ENCODE measurements at regions of chr2 and their contacts with region 1.

Region 1: GRCh38 chr2:229273723-229274338 is 2.7 kb upstream of the PID1 start:
- DNase-seq: no peak
- H3K4me3 ChIP-seq: peak overlapping the region in 2 of 8 donors; percentile 10 to 45
- H3K27ac ChIP-seq: no peak overlapping the region
- H3K4me1 ChIP-seq: peaks cover 0 to 13% (median 2%) of the 10 kb centered on the region in 6 donors
- H3K27me3 ChIP-seq: peaks cover 0 to 44% (median 5%) of the 10 kb centered on the region in 7 donors
- CTCF ChIP-seq: peak in 10 of 11 experiments; percentile 24 to 77 (median 64)
- POLR2A ChIP-seq: no peak

Region 2: GRCh38 chr2:228699400-228699799 is 574.4 kb before region 1 on chr2:
- intact Hi-C with region 1: loop called (anchors 10 kb)
- DNase-seq: no peak
- H3K4me3 ChIP-seq: no peak overlapping the region
- H3K27ac ChIP-seq: no peak overlapping the region
- H3K4me1 ChIP-seq: no peaks in the 10 kb centered on the region
- H3K27me3 ChIP-seq: no peaks in the 10 kb centered on the region
- CTCF ChIP-seq: no peak
- POLR2A ChIP-seq: no peak

Region 3: GRCh38 chr2:229133155-229133772 is 140.6 kb before region 1 on chr2:
- intact Hi-C with region 1: loop called (anchors 5 kb)
- DNase-seq: no peak
- H3K4me3 ChIP-seq: no peak overlapping the region
- H3K27ac ChIP-seq: no peak overlapping the region
- H3K4me1 ChIP-seq: no peaks in the 10 kb centered on the region
- H3K27me3 ChIP-seq: no peaks in the 10 kb centered on the region
- CTCF ChIP-seq: peak in 5 of 11 experiments; percentile 12 to 35 (median 23)
- POLR2A ChIP-seq: no peak

Region 4: GRCh38 chr2:229220254-229220653 is 53.6 kb before region 1 on chr2:
- intact Hi-C with region 1: no loop called
- DNase-seq: no peak
- H3K4me3 ChIP-seq: no peak overlapping the region
- H3K27ac ChIP-seq: no peak overlapping the region
- H3K4me1 ChIP-seq: no peaks in the 10 kb centered on the region
- H3K27me3 ChIP-seq: no peaks in the 10 kb centered on the region
- CTCF ChIP-seq: no peak
- POLR2A ChIP-seq: no peak

Measured in spleen (tissue), 13 donors.